Activated T-helper 2 cell treated with anti-CD3 and anti-CD28 coated beads, Interferon-gamma antibody, Interleukin-2, Interleukin-4, amounts not matched to agents 10 μg/mL and 5 μg/mL and 100 μg/mL, durations not matched to agents 14 hours and 24 hours and 36 hours (primary cell): ENCODE measurements at regions of chr1 and their contacts with region 1.

Region 1: DNA sequence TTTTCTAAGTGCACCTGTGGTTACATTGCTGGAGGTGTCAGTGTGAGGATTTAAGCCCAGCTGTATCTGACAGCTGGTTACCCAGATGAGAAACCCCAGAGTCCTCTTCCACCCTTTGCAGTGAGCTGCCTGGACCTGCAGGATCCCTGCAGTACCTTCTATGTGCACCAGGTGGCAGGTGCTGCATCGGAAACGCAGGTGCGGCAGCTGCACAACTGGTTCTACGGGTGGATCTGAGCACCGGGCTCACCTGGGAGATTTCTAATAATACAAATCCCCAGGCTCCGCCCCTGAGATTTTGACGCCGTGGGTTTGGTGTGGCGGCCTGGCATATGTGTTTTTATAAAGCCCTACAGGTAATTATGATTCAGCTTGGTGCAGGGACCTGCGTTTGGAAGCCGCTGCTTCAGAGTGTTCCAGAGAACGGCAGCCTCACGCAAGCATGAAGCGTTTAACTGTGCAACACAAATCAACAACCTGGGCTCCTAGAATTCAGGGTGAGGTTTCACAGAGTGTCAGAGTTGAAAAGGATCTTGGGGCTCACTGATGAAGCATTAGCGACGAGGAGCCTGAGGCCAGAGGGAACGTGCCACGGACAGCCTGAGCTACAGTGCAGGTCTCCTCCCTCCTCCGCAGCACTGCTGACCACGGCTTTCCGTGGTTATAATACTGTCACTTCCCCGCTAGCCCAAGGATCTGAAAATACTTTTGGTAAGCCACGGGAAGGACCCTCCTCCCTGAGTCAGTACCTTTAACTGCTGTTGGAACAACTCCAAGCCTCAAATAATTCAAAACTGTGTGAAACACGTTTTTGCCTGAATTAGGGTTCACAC is 96.7 kb upstream of the TRABD2B start:
- DNase-seq: peak; percentile 55
- H3K4me3 Mint-ChIP-seq: no peak overlapping the region
- H3K27ac Mint-ChIP-seq: no peak overlapping the region
- H3K4me1 Mint-ChIP-seq: no peaks in the 10 kb centered on the region
- H3K27me3 Mint-ChIP-seq: peaks cover 13% of the 10 kb centered on the region

Region 2: DNA sequence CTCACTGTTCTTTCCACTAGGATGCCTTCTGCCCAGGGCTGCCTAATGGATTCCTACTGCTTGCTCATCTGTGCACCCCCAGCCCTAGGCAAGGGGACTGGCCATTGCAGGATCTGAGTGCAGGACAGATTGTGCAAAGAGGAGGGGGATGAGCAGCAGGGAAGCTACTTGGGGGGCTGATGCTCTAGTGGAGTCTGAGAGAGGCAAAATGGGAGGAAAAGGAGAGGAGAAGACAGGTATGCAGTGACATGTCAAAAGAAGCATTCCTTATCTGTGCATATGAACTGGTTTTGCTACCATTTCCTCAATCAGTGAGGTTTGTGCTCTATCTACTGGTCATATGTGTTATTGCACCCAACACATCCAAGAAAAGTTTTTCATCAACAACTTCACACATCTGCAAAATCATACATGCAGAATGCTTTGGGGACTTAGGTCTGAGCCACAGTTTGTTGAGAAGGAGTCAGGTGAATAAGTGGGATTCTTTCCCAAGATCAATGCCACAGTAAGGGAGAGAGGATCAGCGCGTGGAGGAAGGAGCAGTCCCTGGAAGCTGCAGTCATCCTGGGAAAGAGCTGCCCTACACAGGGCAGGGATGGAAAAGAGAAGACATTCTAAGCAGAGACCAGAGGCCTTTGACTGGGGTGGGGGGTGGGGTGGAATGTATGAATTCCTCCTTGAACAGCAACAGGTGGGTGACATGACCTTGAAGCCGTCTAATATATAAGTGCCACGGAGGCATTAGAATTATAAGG is 143.0 kb after region 1 on chr1:
- intact Hi-C with region 1: loop called (anchors 5 kb)
- DNase-seq: no peak
- H3K4me3 Mint-ChIP-seq: no peak overlapping the region
- H3K27ac Mint-ChIP-seq: no peak overlapping the region
- H3K4me1 Mint-ChIP-seq: no peaks in the 10 kb centered on the region
- H3K27me3 Mint-ChIP-seq: no peaks in the 10 kb centered on the region